ENCODE measurements at regions of chr3 and their contacts with region 1.

Region 1: GRCh38 chr3:188286087-188286513 is 132.1 kb downstream of the LPP start:
- DNase-seq: peak; percentile 43 to 91
- H3K4me3 ChIP-seq: no peak overlapping the region
- H3K27ac ChIP-seq: peak overlapping the region; percentile 92 to 94
- H3K4me1 ChIP-seq: peaks cover 29 to 70% of the 10 kb centered on the region in 2 donors
- H3K27me3 ChIP-seq: no peaks in the 10 kb centered on the region
- CTCF ChIP-seq: no peak

Region 2: DNA sequence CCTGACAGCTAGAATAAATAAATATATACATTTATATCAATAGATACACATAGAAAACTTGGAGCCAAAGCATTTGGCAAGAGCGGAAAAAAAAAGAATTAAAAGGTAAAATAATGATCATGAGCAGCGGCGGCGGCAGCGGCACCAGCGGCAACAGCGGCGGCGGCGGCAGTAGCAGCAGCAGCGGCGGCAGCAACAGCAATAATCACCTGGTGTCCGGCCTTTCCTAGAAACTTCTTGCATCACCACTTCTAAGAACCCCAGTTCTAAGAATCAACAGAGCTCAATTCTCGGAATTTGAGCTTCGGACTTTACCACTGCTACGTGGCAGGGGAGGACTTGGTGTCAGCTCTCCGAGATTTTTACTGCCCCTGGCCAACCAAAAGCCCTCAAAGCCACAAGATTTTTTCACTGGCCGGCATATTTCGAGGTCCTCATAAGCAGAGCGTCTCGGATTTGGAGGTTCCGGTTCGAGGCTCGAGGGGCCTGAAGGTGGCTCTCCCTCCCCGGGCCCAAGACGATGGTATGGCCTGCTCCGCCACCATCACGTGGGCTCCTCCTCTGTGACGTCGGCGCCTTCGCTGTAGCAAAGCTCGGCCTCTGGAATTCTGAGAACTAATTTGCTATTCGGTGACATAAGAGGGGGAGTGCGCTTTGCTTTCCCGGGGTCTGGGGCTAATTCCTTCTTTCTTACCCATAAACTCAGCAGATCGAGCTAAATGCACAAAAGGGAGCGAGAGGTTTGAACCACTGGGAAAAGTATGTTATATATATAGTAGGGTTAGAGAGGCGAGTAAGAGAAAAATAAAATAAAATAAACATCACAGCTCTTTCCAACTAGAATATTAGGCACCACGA is 540.7 kb before region 1 on chr3 and contains the start of gene BCL6:
- intact Hi-C with region 1: loop called (anchors 1 kb)
- DNase-seq: peak; percentile 66 to 97
- H3K4me3 ChIP-seq: peak within 1 kb of the TSS; percentile 73 to 75
- H3K27ac ChIP-seq: peak within 1 kb of the TSS; percentile 98 to 99
- H3K4me1 ChIP-seq: peaks cover 9 to 12% of the 10 kb centered on the region in 2 donors
- H3K27me3 ChIP-seq: no peaks in the 10 kb centered on the region
- CTCF ChIP-seq: peak in 1 of 3 experiments; percentile 12
- total RNA-seq, gene BCL6: 97.9 TPM

Region 3: DNA sequence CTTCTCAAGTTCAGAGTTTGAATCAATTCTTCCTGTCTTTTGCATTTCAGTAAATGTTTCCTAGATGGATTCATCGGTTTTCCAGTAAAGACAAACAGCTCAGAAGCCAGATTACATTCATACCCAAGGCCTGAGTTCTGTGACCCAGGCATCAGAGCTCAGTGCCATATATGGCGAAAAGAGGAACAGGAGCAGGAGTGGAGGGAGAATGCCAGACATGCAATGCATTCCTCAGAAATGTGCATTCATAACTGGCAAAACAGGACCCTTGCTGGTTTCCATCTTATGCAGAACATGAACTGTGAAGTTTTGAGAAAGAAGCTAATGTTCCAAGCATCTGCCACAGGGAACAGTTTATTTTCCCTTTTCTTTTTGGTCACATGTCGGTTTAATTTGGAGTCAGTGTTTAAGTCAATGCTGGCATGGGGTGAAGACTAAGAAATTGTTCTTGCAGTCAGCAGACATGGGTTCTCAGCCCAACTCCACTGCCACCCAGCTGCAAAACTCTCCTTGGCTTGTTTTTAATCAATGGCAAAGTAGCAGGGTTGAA is 15.6 kb before region 1 on chr3:
- intact Hi-C with region 1: loop called (anchors 2 kb)
- DNase-seq: peak in 1 of 2 donors; percentile 91
- H3K4me3 ChIP-seq: peak overlapping the region in 1 of 2 donors; percentile 10
- H3K27ac ChIP-seq: peak overlapping the region; percentile 94 to 99
- H3K4me1 ChIP-seq: peaks cover 28 to 73% of the 10 kb centered on the region in 2 donors
- H3K27me3 ChIP-seq: no peaks in the 10 kb centered on the region
- CTCF ChIP-seq: peak in 1 of 3 experiments; percentile 35

Region 4: DNA sequence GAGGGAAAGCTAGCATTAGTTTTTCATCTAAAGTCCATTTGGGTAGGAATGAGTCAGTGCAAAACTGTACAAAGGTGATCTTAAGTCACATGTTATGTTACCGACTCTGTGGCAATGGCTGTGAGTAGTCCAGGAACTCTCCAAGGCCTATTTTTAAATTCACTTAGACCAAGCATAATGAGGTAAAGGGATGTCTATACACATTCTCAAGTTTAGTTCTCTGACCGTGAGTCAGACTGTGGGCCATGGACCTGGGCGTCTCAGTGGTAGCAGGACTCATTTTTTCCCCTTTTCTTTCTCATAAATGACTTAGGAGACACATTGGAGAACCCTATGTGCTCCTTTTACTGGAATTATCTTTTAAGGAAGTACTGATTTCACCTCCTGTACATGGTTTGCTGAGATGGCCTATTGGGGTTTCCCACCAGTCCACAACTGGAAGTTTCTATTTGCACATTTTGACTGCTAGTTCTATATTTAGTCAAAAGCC is 397.0 kb after region 1 on chr3:
- intact Hi-C with region 1: loop called (anchors 10 kb)
- DNase-seq: peak; percentile 17 to 91
- H3K4me3 ChIP-seq: no peak overlapping the region
- H3K27ac ChIP-seq: peak overlapping the region; percentile 68 to 83
- H3K4me1 ChIP-seq: peaks cover 17 to 48% of the 10 kb centered on the region in 2 donors
- H3K27me3 ChIP-seq: no peaks in the 10 kb centered on the region
- CTCF ChIP-seq: no peak